ENCODE measurements at regions of chr6 and their contacts with region 1.

Region 1: GRCh38 chr6:52325695-52326441 is 36.1 kb upstream of the PAQR8 start:
- DNase-seq: peak; percentile 98
- ATAC-seq: peak; percentile 93
- H3K4me3 ChIP-seq: peak overlapping the region; percentile 10 to 48 (median 24)
- H3K27ac ChIP-seq: peak overlapping the region; percentile 93
- H3K4me1 ChIP-seq: peaks cover 72% of the 10 kb centered on the region
- H3K27me3 ChIP-seq: no peaks in the 10 kb centered on the region
- CTCF ChIP-seq: no peak
- EP300 ChIP-seq: peak; percentile 30 to 89; a peak in 2 of 4 replicates
- POLR2A ChIP-seq: peak; percentile 37 to 49; a peak in 3 of 4 replicates
- RAD21 ChIP-seq: peak; percentile 35

Region 2: GRCh38 chr6:52261229-52261628 is 64.6 kb before region 1 on chr6:
- CTCF ChIA-PET with region 1: no interaction called
- POLR2A ChIA-PET with region 1: no interaction called
- in situ Hi-C with region 1: no loop called
- intact Hi-C with region 1: no loop called
- DNase-seq: no peak
- ATAC-seq: peak; percentile 6
- H3K4me3 ChIP-seq: no peak overlapping the region
- H3K27ac ChIP-seq: no peak overlapping the region
- H3K4me1 ChIP-seq: no peaks in the 10 kb centered on the region
- H3K27me3 ChIP-seq: no peaks in the 10 kb centered on the region
- CTCF ChIP-seq: no peak
- EP300 ChIP-seq: no peak
- POLR2A ChIP-seq: no peak
- RAD21 ChIP-seq: no peak

Region 3: DNA sequence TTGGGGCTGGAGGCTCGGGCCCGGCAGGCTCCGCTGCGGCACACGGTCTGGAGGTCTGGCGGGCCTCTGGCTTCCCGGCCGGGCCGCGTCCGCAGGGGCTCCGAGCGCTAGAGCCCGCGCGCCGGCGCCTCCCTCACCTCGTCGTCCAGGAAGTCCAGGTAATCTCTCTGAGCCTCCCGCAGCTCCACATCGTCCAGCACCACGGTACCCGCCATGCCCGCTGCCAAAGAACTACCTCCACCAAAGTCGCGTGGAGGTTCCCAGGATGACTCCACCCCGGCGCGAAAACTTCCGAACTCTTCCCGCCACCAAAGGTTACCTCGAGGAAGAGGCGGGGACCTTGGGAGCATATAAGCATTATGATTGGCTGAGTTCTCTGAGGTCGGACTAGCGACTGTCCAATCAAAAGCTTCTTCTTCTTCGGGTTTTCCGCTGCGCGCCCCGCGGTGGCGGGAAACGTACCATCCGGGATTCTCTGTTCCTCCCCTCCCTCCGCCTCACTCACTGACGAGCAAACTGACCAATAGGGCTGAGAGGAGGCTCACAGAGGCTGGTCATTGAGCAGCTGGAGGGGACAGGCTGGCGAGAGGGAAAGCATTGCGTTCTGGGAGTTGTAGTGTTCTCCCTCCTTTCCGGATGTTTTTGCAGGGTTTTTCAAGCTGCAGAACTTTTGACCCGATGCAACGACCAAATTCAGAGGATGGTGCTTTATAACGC is 41.2 kb before region 1 on chr6 and contains the start of gene MCM3:
- CTCF ChIA-PET with region 1: no interaction called
- POLR2A ChIA-PET with region 1: interaction called, 14 read pairs
- in situ Hi-C with region 1: no loop called
- intact Hi-C with region 1: loop called (anchors 1 kb)
- DNase-seq: peak; percentile 100
- ATAC-seq: peak; percentile 99
- H3K4me3 ChIP-seq: peak within 1 kb of the TSS; percentile 80 to 94 (median 90)
- H3K27ac ChIP-seq: peak within 1 kb of the TSS; percentile 86
- H3K4me1 ChIP-seq: peaks cover 67% of the 10 kb centered on the region
- H3K27me3 ChIP-seq: no peaks in the 10 kb centered on the region; a peak in 1 of 5 replicates
- CTCF ChIP-seq: peak; percentile 14; the same call in 1 of the 2 replicates
- EP300 ChIP-seq: peak in 1 of 2 experiments; percentile 15; a peak in 1 of 4 replicates
- POLR2A ChIP-seq: peak; percentile 71 to 94
- RAD21 ChIP-seq: peak; percentile 69
- total RNA-seq, gene MCM3: 288 and 336 TPM in 2 replicates

Region 4: GRCh38 chr6:52310932-52311331 is 14.9 kb before region 1 on chr6:
- CTCF ChIA-PET with region 1: no interaction called
- POLR2A ChIA-PET with region 1: interaction called, 11 read pairs
- in situ Hi-C with region 1: no loop called
- intact Hi-C with region 1: no loop called
- DNase-seq: no peak
- ATAC-seq: no peak
- H3K4me3 ChIP-seq: no peak overlapping the region
- H3K27ac ChIP-seq: no peak overlapping the region
- H3K4me1 ChIP-seq: peaks cover 28% of the 10 kb centered on the region
- H3K27me3 ChIP-seq: no peaks in the 10 kb centered on the region
- CTCF ChIP-seq: no peak
- EP300 ChIP-seq: no peak
- POLR2A ChIP-seq: no peak
- RAD21 ChIP-seq: no peak

Region 5: GRCh38 chr6:52352239-52353008 is 26.6 kb after region 1 on chr6:
- CTCF ChIA-PET with region 1: no interaction called
- POLR2A ChIA-PET with region 1: interaction called, 48 read pairs
- in situ Hi-C with region 1: no loop called
- intact Hi-C with region 1: no loop called
- DNase-seq: peak; percentile 98
- ATAC-seq: peak; percentile 97
- H3K4me3 ChIP-seq: peak overlapping the region in 2 of 3 experiments; percentile 12 to 22; a peak in 3 of 6 replicates
- H3K27ac ChIP-seq: peak overlapping the region; percentile 55
- H3K4me1 ChIP-seq: peaks cover 58% of the 10 kb centered on the region
- H3K27me3 ChIP-seq: no peaks in the 10 kb centered on the region
- CTCF ChIP-seq: no peak
- EP300 ChIP-seq: peak; percentile 14 to 71; a peak in 3 of 4 replicates
- POLR2A ChIP-seq: no peak
- RAD21 ChIP-seq: no peak

Region 6: DNA sequence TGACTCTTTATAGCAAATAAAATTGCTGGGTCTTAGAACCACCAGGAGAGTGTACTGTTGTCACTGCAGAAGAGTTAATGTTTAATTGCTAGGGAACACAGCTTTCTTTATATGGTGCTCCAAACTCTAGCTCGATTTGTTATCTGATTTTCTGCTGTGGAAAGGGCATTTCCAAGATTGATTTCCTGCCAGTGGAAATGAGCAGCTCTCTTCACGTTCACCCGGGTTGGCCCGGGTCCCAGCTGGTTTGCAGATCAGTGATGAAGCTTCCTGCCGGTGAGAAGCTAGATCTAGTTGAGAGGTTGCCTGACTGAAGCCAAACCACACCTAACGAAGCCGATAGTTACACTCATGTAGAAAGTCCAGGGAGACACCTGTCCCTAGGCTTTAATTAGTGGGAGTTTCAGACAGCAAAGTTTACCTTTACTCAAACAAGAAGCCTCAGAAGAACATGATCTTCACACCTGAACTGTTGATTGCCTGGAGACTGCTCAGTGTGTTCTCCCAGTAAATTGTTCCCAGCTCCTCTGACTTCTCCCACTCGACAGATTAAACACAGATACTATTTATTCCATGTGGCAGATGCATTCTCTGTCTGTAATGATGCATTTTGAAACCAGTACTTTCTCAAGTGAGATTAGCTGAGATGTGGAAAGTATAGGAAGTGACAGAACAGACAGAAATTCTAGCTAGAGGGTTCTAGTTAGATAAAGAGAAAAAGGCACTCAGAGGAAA is 63.9 kb after region 1 on chr6:
- CTCF ChIA-PET with region 1: no interaction called
- POLR2A ChIA-PET with region 1: interaction called, 12 read pairs
- in situ Hi-C with region 1: no loop called
- intact Hi-C with region 1: no loop called
- DNase-seq: peak; percentile 94
- ATAC-seq: peak; percentile 94
- H3K4me3 ChIP-seq: peak overlapping the region; percentile 11 to 56 (median 30)
- H3K27ac ChIP-seq: peak overlapping the region; percentile 84
- H3K4me1 ChIP-seq: peaks cover 53% of the 10 kb centered on the region
- H3K27me3 ChIP-seq: no peaks in the 10 kb centered on the region
- CTCF ChIP-seq: peak; percentile 42
- EP300 ChIP-seq: peak in 1 of 2 experiments; percentile 68; a peak in 2 of 4 replicates
- POLR2A ChIP-seq: peak in 1 of 2 experiments; percentile 34; a peak in 2 of 4 replicates
- RAD21 ChIP-seq: no peak

Region 7: DNA sequence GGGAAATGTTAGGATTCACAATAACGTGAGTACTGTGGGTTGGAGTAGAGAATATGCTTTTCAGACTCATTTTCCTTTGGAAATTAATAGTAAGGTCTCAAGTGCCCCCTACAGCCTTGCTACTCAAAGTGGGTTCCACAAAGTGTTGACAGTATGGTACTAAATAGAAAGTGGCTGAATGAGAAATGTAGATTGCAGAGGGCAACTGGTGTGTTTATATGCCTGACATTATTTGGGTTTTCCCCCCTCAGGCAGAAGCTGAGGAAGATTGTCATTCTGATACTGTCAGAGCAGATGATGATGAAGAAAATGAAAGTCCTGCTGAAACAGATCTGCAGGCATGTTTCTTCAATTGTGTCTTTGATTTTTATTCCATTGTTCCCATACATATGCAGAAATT is 744.9 kb after region 1 on chr6:
- CTCF ChIA-PET with region 1: no interaction called
- POLR2A ChIA-PET with region 1: no interaction called
- in situ Hi-C with region 1: no loop called
- intact Hi-C with region 1: no loop called
- DNase-seq: no peak
- ATAC-seq: no peak
- H3K4me3 ChIP-seq: no peak overlapping the region
- H3K27ac ChIP-seq: no peak overlapping the region
- H3K4me1 ChIP-seq: peaks cover 21% of the 10 kb centered on the region
- H3K27me3 ChIP-seq: no peaks in the 10 kb centered on the region; a peak in 1 of 5 replicates
- CTCF ChIP-seq: peak; percentile 16; the same call in 1 of the 2 replicates
- EP300 ChIP-seq: no peak
- POLR2A ChIP-seq: no peak
- RAD21 ChIP-seq: no peak